Activated T-helper 2 cell treated with anti-CD3 and anti-CD28 coated beads, Interferon-gamma antibody, Interleukin-2, Interleukin-4, amounts not matched to agents 10 μg/mL and 5 μg/mL and 100 μg/mL, durations not matched to agents 14 hours and 24 hours and 36 hours (primary cell): ENCODE measurements at regions of chr5 and their contacts with region 1.

Region 1: GRCh38 chr5:177390363-177391300 is 6.4 kb downstream of the SLC34A1 start:
- DNase-seq: peak; percentile 82
- H3K4me3 Mint-ChIP-seq: no peak overlapping the region
- H3K27ac Mint-ChIP-seq: peak overlapping the region; percentile 63
- H3K4me1 Mint-ChIP-seq: peaks cover 26% of the 10 kb centered on the region
- H3K27me3 Mint-ChIP-seq: peaks cover 8% of the 10 kb centered on the region

Region 2: DNA sequence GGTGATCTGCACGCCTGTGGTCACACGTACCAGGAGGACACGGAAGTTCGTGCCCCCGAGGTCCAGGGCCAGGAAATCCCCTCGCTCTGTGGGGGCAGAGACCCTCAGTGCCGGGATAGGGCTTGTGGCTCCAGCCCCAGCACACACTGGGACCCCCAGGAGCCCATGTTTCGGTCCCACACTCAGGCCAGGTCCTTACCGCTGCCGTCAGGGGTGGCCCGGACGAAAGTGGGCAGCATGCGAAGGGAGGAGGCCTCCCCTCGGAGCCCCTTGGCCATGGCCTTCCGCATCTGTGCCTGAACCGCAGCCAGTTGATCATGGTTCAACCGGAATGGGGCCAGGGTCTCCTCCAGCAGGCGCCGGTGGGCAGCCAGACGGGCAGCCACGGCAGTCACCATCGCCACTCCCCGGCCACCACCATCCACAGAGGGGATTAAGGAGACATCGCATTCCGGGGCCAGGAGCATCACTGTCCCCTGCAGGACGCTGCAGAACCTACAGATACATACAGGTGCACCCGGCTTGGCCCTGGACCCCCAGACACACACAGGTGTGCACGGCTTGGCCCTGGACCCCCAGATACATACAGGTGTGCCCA is 503.3 kb before region 1 on chr5:
- intact Hi-C with region 1: no loop called
- DNase-seq: no peak
- H3K4me3 Mint-ChIP-seq: no peak overlapping the region
- H3K27ac Mint-ChIP-seq: no peak overlapping the region
- H3K4me1 Mint-ChIP-seq: no peaks in the 10 kb centered on the region
- H3K27me3 Mint-ChIP-seq: peaks cover 6% of the 10 kb centered on the region

Region 3: GRCh38 chr5:177351385-177352329 is 39.0 kb before region 1 on chr5 and contains the start of gene LMAN2:
- intact Hi-C with region 1: no loop called
- DNase-seq: peak; percentile 92
- H3K4me3 Mint-ChIP-seq: peak within 1 kb of the TSS; percentile 95
- H3K27ac Mint-ChIP-seq: peak within 1 kb of the TSS; percentile 100
- H3K4me1 Mint-ChIP-seq: peaks cover 44% of the 10 kb centered on the region
- H3K27me3 Mint-ChIP-seq: no peaks in the 10 kb centered on the region
- total RNA-seq, gene LMAN2: 130 and 137 TPM in 2 replicates

Region 4: DNA sequence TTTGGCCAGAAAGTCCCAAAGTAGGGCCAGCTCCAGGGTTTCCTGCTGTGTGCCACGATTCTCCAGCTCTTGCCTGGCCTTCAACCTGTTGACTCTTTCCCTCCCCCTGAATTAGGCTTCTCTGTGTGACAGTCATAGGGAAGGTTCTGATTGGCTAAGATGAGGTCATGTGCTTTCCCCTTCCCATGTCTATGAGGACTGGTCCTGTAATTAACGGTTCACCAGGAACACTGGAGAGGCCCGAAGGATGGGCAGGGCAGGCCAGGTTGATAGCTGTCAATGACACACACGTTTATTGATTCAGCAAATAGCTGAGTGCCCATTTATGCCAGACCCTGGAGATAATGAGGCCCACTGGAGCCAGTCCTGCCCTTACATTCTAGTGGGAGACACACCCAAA is 47.0 kb after region 1 on chr5:
- intact Hi-C with region 1: no loop called
- DNase-seq: no peak
- H3K4me3 Mint-ChIP-seq: no peak overlapping the region
- H3K27ac Mint-ChIP-seq: peak overlapping the region; percentile 12
- H3K4me1 Mint-ChIP-seq: peaks cover 29% of the 10 kb centered on the region
- H3K27me3 Mint-ChIP-seq: no peaks in the 10 kb centered on the region

Region 5: GRCh38 chr5:177454397-177455035 is 63.9 kb after region 1 on chr5:
- intact Hi-C with region 1: loop called (anchors 1 kb)
- DNase-seq: peak; percentile 89
- H3K4me3 Mint-ChIP-seq: peak overlapping the region; percentile 84
- H3K27ac Mint-ChIP-seq: no peak overlapping the region
- H3K4me1 Mint-ChIP-seq: peaks cover 17% of the 10 kb centered on the region
- H3K27me3 Mint-ChIP-seq: peaks cover 8% of the 10 kb centered on the region